ENCODE measurements at regions of chr2 and their contacts with region 1.

Region 1: DNA sequence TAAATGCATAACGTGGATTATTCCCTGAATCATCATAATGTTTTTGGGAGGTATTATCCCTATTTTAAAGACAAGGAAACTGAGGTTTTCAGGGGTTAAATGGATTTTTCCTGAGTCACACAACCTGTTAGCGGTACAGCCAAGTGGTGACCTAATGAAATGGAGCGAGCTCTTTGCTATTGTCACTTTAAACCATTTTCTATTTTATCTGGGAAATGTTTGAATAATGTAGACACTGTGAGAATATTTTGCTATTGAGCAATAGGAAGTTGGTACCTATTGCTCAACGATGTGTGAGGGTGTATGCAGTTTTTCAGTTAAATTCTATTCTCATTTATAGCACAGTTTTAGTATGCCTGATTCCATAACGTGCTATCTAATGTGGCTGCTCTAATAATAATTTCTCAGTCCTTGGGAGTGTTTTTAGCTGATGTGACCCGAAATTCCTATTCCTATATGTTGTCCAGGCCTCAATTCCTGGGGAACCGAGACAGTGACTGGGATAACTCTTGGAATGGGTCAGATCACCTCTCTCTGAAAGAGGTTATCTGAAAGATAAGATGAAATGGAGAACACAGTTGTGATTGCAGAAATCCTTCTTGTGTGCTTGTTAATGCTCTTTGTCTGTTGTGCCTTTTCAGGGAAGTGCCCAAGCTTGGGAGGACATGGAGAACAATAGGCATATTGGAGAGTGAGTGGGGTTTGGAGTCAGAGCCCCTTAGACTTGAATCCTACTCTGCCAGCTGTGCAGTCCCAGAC is 38.4 kb downstream of the ABCB11 start:
- DNase-seq: peak; percentile 80
- H3K4me3 Mint-ChIP-seq: peak overlapping the region; percentile 26
- H3K27ac Mint-ChIP-seq: peak overlapping the region; percentile 36
- H3K4me1 Mint-ChIP-seq: peaks cover 37% of the 10 kb centered on the region
- H3K27me3 Mint-ChIP-seq: no peaks in the 10 kb centered on the region
- CTCF ChIP-seq: no peak

Region 2: DNA sequence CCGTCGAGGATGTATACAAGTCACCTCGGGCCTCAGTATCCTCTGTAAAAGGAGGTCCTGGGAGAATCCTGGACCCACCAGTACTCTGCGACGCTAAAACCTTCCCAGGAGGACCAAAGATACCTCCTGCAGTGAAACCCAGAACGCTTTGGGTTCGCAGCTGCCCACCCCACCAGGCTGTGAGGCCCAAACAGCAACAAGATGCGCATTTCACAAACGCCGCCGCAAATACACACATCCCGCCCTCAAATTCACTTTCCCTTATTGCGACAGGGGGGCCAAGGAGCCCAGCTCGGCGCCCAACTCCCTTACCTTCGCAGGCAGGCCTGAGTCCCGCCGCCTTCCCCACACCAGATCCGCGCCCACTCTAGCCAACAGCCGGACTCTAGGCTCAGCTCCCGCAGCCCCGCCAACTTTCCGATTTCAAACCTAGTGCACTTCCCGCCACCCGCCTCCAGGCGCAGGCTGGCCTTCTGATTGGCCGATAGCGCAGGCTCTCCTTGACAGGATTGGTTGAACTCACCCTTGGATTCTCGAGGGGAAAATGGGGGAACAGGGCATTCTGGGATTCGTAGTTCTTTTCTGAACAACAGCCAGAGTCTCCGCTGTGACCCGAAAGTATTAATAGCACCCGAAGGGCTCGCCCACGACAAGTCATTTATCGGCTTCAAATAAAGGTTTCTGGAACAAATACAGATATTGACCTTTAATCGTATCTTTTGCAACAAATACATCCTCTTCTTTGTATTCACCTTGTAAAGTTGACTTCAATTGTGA is 102.6 kb before region 1 on chr2 and contains the start of gene SPC25:
- CTCF ChIA-PET with region 1: no interaction called
- POLR2A ChIA-PET with region 1: no interaction called
- intact Hi-C with region 1: no loop called
- DNase-seq: peak; percentile 95
- H3K4me3 Mint-ChIP-seq: peak within 1 kb of the TSS; percentile 89
- H3K27ac Mint-ChIP-seq: peak within 1 kb of the TSS; percentile 52
- H3K4me1 Mint-ChIP-seq: peaks cover 11% of the 10 kb centered on the region
- H3K27me3 Mint-ChIP-seq: peaks cover 34% of the 10 kb centered on the region
- CTCF ChIP-seq: no peak
- total RNA-seq, gene SPC25: 2.5 and 3.5 TPM in 2 replicates

Region 3: DNA sequence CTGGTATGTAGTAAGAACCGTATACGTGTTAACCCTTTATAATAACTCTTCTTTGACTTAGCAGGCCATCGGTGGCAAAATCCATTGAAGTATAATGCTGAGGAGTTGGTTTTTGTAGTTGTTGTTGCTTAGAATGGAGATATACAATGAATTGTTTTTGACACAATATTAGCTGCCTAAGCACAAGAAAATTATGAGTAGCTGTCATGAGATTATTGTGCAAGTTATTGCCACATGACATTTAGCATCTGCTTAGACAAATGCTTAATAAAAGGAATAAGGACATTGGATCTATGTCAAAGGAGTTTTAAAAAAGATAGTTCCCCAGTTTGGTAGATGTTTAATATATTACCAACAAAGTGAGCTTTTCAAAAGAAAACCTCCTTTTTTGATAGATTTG is 21.5 kb before region 1 on chr2:
- CTCF ChIA-PET with region 1: interaction called, 5 read pairs
- POLR2A ChIA-PET with region 1: interaction called, 15 read pairs
- intact Hi-C with region 1: no loop called
- DNase-seq: no peak
- H3K4me3 Mint-ChIP-seq: no peak overlapping the region
- H3K27ac Mint-ChIP-seq: no peak overlapping the region
- H3K4me1 Mint-ChIP-seq: no peaks in the 10 kb centered on the region
- H3K27me3 Mint-ChIP-seq: no peaks in the 10 kb centered on the region
- CTCF ChIP-seq: no peak

Region 4: GRCh38 chr2:169012812-169013627 is 20.2 kb after region 1 on chr2:
- CTCF ChIA-PET with region 1: interaction called, 3 read pairs
- POLR2A ChIA-PET with region 1: interaction called, 35 read pairs
- intact Hi-C with region 1: loop called (anchors 1 kb)
- DNase-seq: no peak
- H3K4me3 Mint-ChIP-seq: no peak overlapping the region
- H3K27ac Mint-ChIP-seq: peak overlapping the region; percentile 77
- H3K4me1 Mint-ChIP-seq: peaks cover 31% of the 10 kb centered on the region
- H3K27me3 Mint-ChIP-seq: no peaks in the 10 kb centered on the region
- CTCF ChIP-seq: no peak

Region 5: GRCh38 chr2:169069341-169069740 is 76.6 kb after region 1 on chr2 and contains the start of gene DHRS9:
- CTCF ChIA-PET with region 1: no interaction called
- POLR2A ChIA-PET with region 1: interaction called, 11 read pairs
- intact Hi-C with region 1: no loop called
- DNase-seq: peak; percentile 97
- H3K4me3 Mint-ChIP-seq: no peak within 1 kb of the TSS
- H3K27ac Mint-ChIP-seq: peak within 1 kb of the TSS; percentile 53
- H3K4me1 Mint-ChIP-seq: peaks cover 16% of the 10 kb centered on the region
- H3K27me3 Mint-ChIP-seq: no peaks in the 10 kb centered on the region
- CTCF ChIP-seq: no peak
- total RNA-seq, gene DHRS9: 0.21 TPM in 1 of 2 replicates, not detected in the other

Region 6: DNA sequence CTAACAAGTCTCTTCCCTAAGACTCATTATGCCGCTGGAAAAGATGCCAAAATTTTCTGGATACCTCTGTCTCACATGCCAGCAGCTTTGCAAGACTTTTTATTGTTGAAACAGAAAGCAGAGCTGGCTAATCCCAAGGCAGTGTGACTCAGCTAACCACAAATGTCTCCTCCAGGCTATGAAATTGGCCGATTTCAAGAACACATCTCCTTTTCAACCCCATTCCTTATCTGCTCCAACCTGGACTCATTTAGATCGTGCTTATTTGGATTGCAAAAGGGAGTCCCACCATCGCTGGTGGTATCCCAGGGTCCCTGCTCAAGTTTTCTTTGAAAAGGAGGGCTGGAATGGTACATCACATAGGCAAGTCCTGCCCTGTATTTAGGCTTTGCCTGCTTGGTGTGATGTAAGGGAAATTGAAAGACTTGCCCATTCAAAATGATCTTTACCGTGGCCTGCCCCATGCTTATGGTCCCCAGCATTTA is 102.9 kb after region 1 on chr2:
- CTCF ChIA-PET with region 1: interaction called, 3 read pairs
- POLR2A ChIA-PET with region 1: interaction called, 27 read pairs
- intact Hi-C with region 1: no loop called
- DNase-seq: peak; percentile 99
- H3K4me3 Mint-ChIP-seq: peak overlapping the region; percentile 52
- H3K27ac Mint-ChIP-seq: peak overlapping the region; percentile 3
- H3K4me1 Mint-ChIP-seq: peaks cover 45% of the 10 kb centered on the region
- H3K27me3 Mint-ChIP-seq: no peaks in the 10 kb centered on the region
- CTCF ChIP-seq: no peak

Region 7: DNA sequence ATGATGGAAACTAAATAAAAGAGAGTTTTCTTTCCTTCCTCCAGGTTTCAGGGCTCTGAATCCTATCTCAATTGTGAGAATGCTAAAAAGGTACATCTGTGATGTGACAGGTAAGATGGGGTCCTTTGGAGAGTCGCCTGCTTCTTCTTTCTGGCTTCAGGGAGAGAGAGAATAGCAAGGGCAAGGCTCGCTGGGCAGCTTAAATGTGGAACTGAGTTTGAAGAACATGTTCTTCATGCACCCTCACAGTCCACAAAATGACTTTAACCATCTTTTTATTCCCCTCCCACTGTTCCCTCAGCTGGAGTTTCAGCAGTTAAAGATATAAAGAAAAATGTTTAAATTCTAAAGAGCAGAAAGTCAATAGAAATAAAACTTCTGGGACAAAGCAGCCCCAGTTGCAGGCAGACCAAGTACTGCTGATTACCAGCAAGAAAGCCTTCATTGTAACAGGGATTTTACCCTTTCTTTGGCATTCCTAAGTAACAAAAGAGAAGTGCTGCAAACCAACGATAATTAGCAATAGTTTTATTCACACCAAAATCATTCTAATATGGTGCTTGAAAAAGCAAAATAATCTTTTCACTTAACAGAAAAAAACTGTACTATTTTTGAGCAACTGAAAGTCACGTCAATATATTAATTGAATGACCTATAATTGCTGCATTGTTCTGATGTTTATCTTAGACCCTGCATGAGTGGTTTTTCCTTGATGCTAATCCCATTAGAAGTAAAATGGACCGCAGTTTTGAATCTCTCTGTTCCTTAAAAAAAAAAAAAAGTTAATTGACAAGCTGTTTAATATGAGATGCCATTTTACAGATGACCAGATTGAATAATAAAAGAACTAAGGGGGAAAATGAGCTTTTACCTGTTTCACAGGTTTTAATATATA is 308.1 kb after region 1 on chr2:
- CTCF ChIA-PET with region 1: no interaction called
- POLR2A ChIA-PET with region 1: no interaction called
- intact Hi-C with region 1: no loop called
- DNase-seq: no peak
- H3K4me3 Mint-ChIP-seq: no peak overlapping the region
- H3K27ac Mint-ChIP-seq: no peak overlapping the region
- H3K4me1 Mint-ChIP-seq: no peaks in the 10 kb centered on the region
- H3K27me3 Mint-ChIP-seq: peaks cover 70% of the 10 kb centered on the region
- CTCF ChIP-seq: no peak

Measured in MCF 10A (cell line).